ENCODE measurements at regions of chr1 and their contacts with region 1.

Region 1: DNA sequence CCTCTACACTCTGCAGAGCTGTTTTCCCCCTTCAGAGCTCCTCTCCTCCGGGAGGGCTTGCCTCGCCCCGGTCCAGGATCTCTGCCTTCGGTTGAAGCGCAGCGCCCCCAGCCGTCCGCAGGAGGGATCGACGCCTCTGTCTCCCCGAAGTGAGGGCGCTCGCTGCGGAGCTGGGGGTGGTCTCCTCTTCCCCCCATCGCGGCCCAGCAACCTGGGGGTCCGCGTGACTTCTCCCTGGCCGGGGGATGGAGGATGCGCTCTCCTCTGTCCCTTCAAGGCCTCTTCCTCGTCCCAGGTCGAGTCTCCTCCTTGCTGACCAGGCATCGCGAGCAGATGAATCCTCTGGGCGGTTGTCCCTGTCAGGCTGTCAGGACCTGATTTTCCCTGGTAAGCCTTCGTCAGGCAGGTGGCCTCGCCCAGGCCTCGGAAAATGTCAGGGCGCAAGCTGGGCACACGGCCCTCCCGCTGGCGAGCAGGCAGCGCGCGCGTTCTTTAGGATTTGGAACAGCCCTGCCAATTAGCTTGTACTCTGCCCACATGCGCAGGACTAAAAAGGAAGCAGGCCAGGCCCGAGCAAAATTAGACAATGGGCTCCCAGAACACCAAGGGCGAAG is 90.5 kb downstream of the EDEM3 start:
- DNase-seq: peak in 1 of 2 experiments; percentile 94
- H3K4me3 ChIP-seq: peak overlapping the region in 3 of 4 experiments; percentile 5 to 53 (median 31); a peak in 4 of 8 replicates
- H3K27ac ChIP-seq: no peak overlapping the region
- H3K4me1 ChIP-seq: peaks cover 5 to 19% (median 13%) of the 10 kb centered on the region in 4 experiments; a peak in 5 of 7 replicates
- H3K27me3 ChIP-seq: peaks cover 0 to 3% (median under 1%) of the 10 kb centered on the region in 4 experiments; a peak in 2 of 7 replicates
- CTCF ChIP-seq: peak; percentile 87 to 94 (median 88)
- EP300 ChIP-seq: no peak
- POLR2A ChIP-seq: no peak
- RAD21 ChIP-seq: peak; percentile 97

Region 2: GRCh38 chr1:184222652-184223052 is 441.5 kb before region 1 on chr1:
- CTCF ChIA-PET with region 1: interaction called, 17 read pairs
- POLR2A ChIA-PET with region 1: no interaction called
- DNase-seq: peak in 1 of 2 experiments; percentile 83
- H3K4me3 ChIP-seq: no peak overlapping the region
- H3K27ac ChIP-seq: no peak overlapping the region
- H3K4me1 ChIP-seq: no peaks in the 10 kb centered on the region
- H3K27me3 ChIP-seq: peaks cover 1 to 14% (median 9%) of the 10 kb centered on the region in 4 experiments
- CTCF ChIP-seq: peak; percentile 83 to 88 (median 83)
- EP300 ChIP-seq: no peak
- POLR2A ChIP-seq: no peak
- RAD21 ChIP-seq: peak; percentile 83 to 90

Region 3: GRCh38 chr1:184242507-184242943 is 421.6 kb before region 1 on chr1:
- CTCF ChIA-PET with region 1: interaction called, 12 read pairs
- POLR2A ChIA-PET with region 1: interaction called, 3 read pairs
- DNase-seq: no peak
- H3K4me3 ChIP-seq: no peak overlapping the region
- H3K27ac ChIP-seq: no peak overlapping the region
- H3K4me1 ChIP-seq: no peaks in the 10 kb centered on the region
- H3K27me3 ChIP-seq: no peaks in the 10 kb centered on the region
- CTCF ChIP-seq: peak in 2 of 3 experiments; percentile 51 to 55; a peak in 3 of 4 replicates
- EP300 ChIP-seq: no peak
- POLR2A ChIP-seq: no peak
- RAD21 ChIP-seq: peak; percentile 85 to 87

Region 4: DNA sequence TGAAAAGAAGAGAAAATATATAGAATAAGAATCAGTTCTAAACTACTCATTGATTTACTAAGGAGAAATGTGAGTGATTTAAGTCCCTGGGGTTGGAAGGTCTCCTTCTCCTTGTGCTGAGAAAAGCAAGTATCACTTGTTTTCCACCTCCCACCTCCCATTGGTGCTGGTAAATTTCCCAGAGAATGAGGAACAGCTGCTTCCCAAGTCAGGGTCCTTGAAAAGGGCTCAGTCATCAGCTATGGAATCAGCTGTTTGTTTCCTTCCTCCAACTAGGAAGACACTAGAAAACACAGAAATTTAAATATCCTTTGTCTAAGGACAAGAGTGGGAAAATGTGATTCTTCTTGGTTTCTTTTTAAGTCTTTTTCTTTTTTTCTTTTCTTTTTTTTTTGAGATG is 408.6 kb before region 1 on chr1:
- CTCF ChIA-PET with region 1: interaction called, 10 read pairs
- POLR2A ChIA-PET with region 1: no interaction called
- DNase-seq: no peak
- H3K4me3 ChIP-seq: no peak overlapping the region
- H3K27ac ChIP-seq: no peak overlapping the region
- H3K4me1 ChIP-seq: no peaks in the 10 kb centered on the region
- H3K27me3 ChIP-seq: no peaks in the 10 kb centered on the region; a peak in 1 of 7 replicates
- CTCF ChIP-seq: no peak
- EP300 ChIP-seq: no peak
- POLR2A ChIP-seq: no peak
- RAD21 ChIP-seq: no peak

Region 5: GRCh38 chr1:184379111-184379946 is 284.8 kb before region 1 on chr1:
- CTCF ChIA-PET with region 1: interaction called, 36 read pairs
- POLR2A ChIA-PET with region 1: no interaction called
- DNase-seq: no peak
- H3K4me3 ChIP-seq: no peak overlapping the region
- H3K27ac ChIP-seq: no peak overlapping the region
- H3K4me1 ChIP-seq: peaks cover 0 to 11% (median 6%) of the 10 kb centered on the region in 4 experiments; a peak in 6 of 7 replicates
- H3K27me3 ChIP-seq: no peaks in the 10 kb centered on the region
- CTCF ChIP-seq: peak in 2 of 3 experiments; percentile 47 to 64; a peak in 2 of 4 replicates
- EP300 ChIP-seq: no peak
- POLR2A ChIP-seq: no peak
- RAD21 ChIP-seq: peak; percentile 65 to 74

Region 6: DNA sequence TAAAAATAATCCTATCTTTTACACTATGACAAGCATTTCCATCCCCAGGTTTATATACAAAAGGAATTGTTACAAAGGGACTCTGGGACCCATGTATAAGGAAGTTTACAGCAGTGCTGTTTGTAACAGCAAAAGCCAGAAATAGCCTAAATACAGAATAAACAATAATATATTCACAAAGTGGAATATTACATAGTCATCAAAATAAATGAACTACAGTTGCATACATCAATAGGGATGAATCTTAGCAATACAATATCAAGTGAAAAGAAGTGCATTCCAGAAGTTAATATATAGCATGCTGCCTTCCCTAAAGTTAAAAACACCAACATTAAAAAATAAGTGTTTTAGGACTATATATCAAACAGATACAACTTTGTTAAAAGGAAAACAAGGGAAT is 13.2 kb after region 1 on chr1:
- CTCF ChIA-PET with region 1: interaction called, 20 read pairs
- POLR2A ChIA-PET with region 1: interaction called, 3 read pairs
- DNase-seq: no peak
- H3K4me3 ChIP-seq: no peak overlapping the region
- H3K27ac ChIP-seq: no peak overlapping the region
- H3K4me1 ChIP-seq: peaks cover 1 to 13% (median 8%) of the 10 kb centered on the region in 4 experiments; a peak in 4 of 7 replicates
- H3K27me3 ChIP-seq: no peaks in the 10 kb centered on the region
- CTCF ChIP-seq: no peak
- EP300 ChIP-seq: no peak
- POLR2A ChIP-seq: no peak
- RAD21 ChIP-seq: no peak

Region 7: DNA sequence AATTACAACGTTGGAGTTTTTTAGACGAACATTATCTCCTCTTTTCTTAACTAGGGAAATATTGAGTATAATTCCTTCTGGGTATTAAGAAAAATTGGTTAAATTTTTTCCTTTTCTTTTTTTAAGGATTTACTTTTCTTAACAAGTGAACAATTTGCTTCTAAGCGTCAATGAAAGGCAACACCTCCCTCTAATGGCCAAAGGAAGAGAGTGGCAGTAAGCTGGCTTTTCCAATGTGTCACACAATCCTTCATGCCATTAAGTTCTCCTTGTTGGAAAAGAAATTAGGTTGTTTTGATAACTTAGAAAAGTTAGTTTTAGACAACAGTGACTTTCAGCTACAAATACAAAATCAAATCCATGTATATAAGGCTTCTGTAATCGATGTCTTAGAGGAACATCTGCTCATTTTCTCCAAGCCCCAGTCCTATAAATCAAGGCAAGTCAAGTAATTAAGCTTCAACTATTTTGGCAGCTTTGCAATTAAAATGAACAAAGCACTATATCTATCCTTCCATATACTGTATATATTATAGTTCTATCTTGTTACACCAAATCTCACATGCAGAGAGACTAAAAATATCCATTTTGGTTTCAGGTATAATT is 27.7 kb after region 1 on chr1:
- CTCF ChIA-PET with region 1: interaction called, 32 read pairs
- POLR2A ChIA-PET with region 1: interaction called, 3 read pairs
- DNase-seq: no peak
- H3K4me3 ChIP-seq: no peak overlapping the region
- H3K27ac ChIP-seq: no peak overlapping the region
- H3K4me1 ChIP-seq: peaks cover 0 to 4% (median 0%) of the 10 kb centered on the region in 4 experiments; a peak in 1 of 7 replicates
- H3K27me3 ChIP-seq: no peaks in the 10 kb centered on the region
- CTCF ChIP-seq: peak in 2 of 3 experiments; percentile 67 to 75; a peak in 3 of 4 replicates
- EP300 ChIP-seq: no peak
- POLR2A ChIP-seq: no peak
- RAD21 ChIP-seq: peak; percentile 88 to 92

Measured in H1 (cell line).